B cell (primary cell): ENCODE measurements at regions of chr16 and their contacts with region 1.

Region 1: GRCh38 chr16:11797166-11797956 is at the start of gene ZC3H7A:
- DNase-seq: peak; percentile 97
- ATAC-seq: peak; percentile 97
- H3K4me3 ChIP-seq: peak within 1 kb of the TSS; percentile 81 to 99 (median 87)
- H3K4me3 Mint-ChIP-seq: peak within 1 kb of the TSS; percentile 89
- H3K27ac ChIP-seq: peak within 1 kb of the TSS; percentile 93 to 96
- H3K27ac Mint-ChIP-seq: peak within 1 kb of the TSS; percentile 98
- H3K4me1 ChIP-seq: peaks cover 40 to 43% of the 10 kb centered on the region in 2 donors
- H3K4me1 Mint-ChIP-seq: peaks cover 67% of the 10 kb centered on the region
- H3K27me3 ChIP-seq: no peaks in the 10 kb centered on the region
- H3K27me3 Mint-ChIP-seq: no peaks in the 10 kb centered on the region
- CTCF ChIP-seq: peak; percentile 65
- total RNA-seq, gene ZC3H7A: 113 and 126 TPM in 2 replicates

Region 2: DNA sequence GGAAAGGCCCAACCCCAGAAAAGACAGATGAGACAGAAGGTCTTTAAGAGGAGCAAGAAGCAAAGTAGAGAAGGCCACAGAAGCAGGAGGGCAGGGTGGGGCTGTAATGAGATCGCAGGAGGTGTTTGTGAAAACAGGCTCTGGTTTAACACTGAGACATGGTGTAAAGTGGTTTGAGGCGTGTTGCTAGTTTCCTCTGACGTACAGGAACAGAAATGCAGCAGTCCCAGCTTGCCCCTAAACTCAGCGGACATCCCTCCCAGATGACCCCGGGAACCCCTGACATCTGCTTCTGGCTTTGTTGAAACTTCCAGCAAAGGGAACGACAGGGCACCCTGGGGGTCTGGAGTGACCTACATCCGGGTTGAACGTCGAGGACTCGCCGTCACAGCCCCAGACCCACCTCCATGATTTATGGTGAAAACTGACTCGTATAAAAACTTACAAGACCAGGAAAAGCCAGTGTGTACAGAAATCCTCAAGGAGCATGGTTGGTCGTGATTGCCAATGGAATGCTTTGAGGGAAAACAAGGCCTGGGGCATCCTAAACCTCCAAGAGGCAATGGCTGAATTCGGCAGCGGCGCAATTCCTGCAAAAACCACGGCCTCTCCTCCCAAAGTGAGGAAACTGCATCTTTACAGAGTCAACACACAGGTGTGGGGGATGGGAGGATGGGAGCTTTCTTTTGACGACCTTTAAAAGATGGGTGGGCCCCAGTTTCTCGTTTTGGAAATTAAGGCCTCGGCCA is 236.5 kb before region 1 on chr16:
- CTCF ChIA-PET with region 1: no interaction called
- POLR2A ChIA-PET with region 1: no interaction called
- intact Hi-C with region 1: no loop called
- DNase-seq: peak; percentile 46
- ATAC-seq: peak; percentile 65
- H3K4me3 ChIP-seq: no peak overlapping the region
- H3K4me3 Mint-ChIP-seq: no peak overlapping the region
- H3K27ac ChIP-seq: peak overlapping the region; percentile 53 to 66
- H3K27ac Mint-ChIP-seq: peak overlapping the region; percentile 22
- H3K4me1 ChIP-seq: peaks cover 3 to 33% of the 10 kb centered on the region in 2 donors
- H3K4me1 Mint-ChIP-seq: peaks cover 43% of the 10 kb centered on the region
- H3K27me3 ChIP-seq: no peaks in the 10 kb centered on the region
- H3K27me3 Mint-ChIP-seq: no peaks in the 10 kb centered on the region
- CTCF ChIP-seq: no peak

Region 3: DNA sequence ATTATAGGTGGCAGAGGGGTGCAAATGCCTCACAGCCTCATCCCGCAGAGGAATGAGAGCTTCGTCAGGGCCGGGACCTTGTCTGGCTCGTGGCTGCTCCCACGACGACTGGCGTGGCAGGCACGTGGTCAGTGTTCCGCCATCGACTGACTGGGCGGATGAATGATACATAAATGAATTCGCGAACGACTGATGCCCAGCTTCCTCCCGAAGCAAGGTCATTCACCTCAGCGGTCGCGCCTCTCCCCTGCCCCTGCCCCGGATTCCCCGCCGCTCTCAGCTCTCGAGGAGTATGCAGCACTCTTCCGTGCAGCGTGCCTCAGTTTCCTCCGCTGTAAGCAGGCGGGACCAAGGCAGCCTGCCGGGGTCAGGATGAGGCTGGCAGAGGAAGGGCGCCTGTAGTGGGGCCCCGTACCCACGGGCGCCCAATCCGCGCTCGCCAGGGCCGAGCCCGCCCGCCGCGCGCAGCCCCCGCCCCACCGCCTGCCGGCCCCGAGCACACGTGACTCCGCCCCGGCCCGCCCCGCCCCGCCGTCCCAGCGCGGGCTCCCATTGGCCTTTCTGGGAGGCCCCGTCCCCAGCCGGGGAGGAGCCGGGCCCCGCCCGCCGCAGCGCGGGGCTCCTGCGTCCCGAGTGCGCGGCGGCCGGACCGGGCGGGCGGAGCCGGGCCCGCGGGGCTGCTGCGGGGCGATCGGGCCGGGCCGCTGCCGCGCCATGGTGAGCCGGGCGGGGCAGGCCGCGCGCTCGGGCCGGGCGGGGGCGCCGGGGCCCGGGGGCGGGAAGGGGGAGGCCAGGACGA is 129.3 kb before region 1 on chr16 and contains the start of gene SNN:
- CTCF ChIA-PET with region 1: no interaction called
- POLR2A ChIA-PET with region 1: no interaction called
- intact Hi-C with region 1: loop called (anchors 5 kb)
- DNase-seq: peak; percentile 90
- ATAC-seq: peak; percentile 76
- H3K4me3 ChIP-seq: peak within 1 kb of the TSS; percentile 68 to 90 (median 77)
- H3K4me3 Mint-ChIP-seq: peak within 1 kb of the TSS; percentile 91
- H3K27ac ChIP-seq: peak within 1 kb of the TSS; percentile 96 to 98
- H3K27ac Mint-ChIP-seq: peak within 1 kb of the TSS; percentile 93
- H3K4me1 ChIP-seq: peaks cover 54 to 73% of the 10 kb centered on the region in 2 donors
- H3K4me1 Mint-ChIP-seq: peaks cover 71% of the 10 kb centered on the region
- H3K27me3 ChIP-seq: no peaks in the 10 kb centered on the region
- H3K27me3 Mint-ChIP-seq: no peaks in the 10 kb centered on the region
- CTCF ChIP-seq: no peak
- total RNA-seq, gene SNN: 60.8 and 63.3 TPM in 2 replicates

Region 4: GRCh38 chr16:11757671-11758545 is 39.5 kb before region 1 on chr16:
- CTCF ChIA-PET with region 1: interaction called, 10 read pairs
- POLR2A ChIA-PET with region 1: no interaction called
- intact Hi-C with region 1: no loop called
- DNase-seq: no peak
- ATAC-seq: no peak
- H3K4me3 ChIP-seq: no peak overlapping the region
- H3K4me3 Mint-ChIP-seq: no peak overlapping the region
- H3K27ac ChIP-seq: no peak overlapping the region
- H3K27ac Mint-ChIP-seq: peak overlapping the region; percentile 26
- H3K4me1 ChIP-seq: peaks cover 0 to 5% of the 10 kb centered on the region in 2 donors
- H3K4me1 Mint-ChIP-seq: peaks cover 7% of the 10 kb centered on the region
- H3K27me3 ChIP-seq: no peaks in the 10 kb centered on the region
- H3K27me3 Mint-ChIP-seq: no peaks in the 10 kb centered on the region
- CTCF ChIP-seq: no peak

Region 5: DNA sequence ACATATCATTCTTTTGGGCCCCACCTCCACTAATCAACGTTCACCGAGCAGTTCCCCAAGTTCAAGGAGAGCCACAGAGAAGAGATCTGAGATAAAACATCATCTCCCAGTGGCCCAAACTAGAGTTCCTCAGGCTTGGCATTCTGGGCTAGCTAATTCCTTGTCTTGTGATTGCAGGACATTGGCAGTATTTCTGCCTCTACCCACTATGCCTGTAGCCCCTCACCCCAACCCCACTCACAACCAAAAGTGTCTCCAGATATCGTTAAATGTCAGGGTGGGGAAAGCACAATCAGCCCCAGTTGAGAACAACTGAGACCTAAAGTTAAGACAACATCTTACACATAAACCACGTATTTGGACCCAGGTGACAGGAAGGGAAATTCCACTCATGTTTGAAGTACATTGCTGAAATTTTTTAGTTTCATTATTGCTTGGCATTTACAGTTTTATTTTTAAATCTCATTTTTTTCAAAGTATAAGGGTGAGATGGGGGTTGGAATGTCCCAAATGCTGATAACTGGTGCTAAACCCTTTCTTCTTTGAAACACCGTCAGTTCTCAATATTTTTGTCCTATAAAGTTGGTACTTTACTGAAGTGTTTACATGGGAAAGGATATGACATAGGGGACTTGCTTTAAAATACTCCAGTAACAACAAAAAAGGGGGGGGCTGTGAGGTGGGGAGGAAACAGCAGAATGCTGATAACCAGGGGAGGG is 13.9 kb before region 1 on chr16:
- CTCF ChIA-PET with region 1: interaction called, 67 read pairs
- POLR2A ChIA-PET with region 1: interaction called, 28 read pairs
- intact Hi-C with region 1: loop called (anchors 1 kb)
- DNase-seq: peak; percentile 86
- ATAC-seq: peak; percentile 75
- H3K4me3 ChIP-seq: peak overlapping the region in 4 of 5 experiments; percentile 22 to 57 (median 37)
- H3K4me3 Mint-ChIP-seq: peak overlapping the region; percentile 93
- H3K27ac ChIP-seq: peak overlapping the region; percentile 98
- H3K27ac Mint-ChIP-seq: peak overlapping the region; percentile 98
- H3K4me1 ChIP-seq: peaks cover 31 to 41% of the 10 kb centered on the region in 2 donors
- H3K4me1 Mint-ChIP-seq: peaks cover 55% of the 10 kb centered on the region
- H3K27me3 ChIP-seq: no peaks in the 10 kb centered on the region
- H3K27me3 Mint-ChIP-seq: no peaks in the 10 kb centered on the region
- CTCF ChIP-seq: no peak

Region 6: DNA sequence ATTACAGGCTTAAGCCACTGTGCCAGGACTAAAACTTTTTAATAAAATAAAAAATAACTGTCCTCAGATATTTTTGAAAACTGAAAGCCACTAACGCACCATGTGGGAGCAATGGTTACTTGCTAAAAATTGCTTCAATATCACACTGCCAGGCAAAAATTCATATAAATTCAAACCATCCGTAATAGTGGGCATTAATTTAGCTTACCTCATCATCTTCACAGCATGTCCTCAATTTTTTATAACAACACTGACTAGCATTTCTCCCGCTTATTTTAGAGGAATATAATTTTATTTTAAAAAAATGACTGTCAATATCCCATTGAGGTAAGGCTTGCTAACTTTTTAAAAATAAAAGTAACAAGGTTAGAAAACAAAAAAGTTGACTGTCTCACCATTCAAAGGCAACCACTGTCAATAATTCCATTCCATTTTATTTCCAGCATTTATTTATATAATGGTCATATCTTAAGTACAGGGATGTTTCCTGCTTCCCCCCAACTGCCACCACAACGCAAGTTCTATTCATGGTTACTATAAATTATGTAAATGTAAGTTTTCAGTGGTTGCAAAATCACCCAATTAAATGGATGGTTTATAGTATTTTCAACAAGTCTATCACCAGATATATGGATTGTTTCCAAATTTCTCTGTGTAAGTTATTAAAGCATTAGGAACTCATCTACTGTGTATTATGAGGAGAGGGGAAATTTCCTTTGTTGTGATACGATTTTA is 93.0 kb after region 1 on chr16:
- CTCF ChIA-PET with region 1: no interaction called
- POLR2A ChIA-PET with region 1: no interaction called
- intact Hi-C with region 1: no loop called
- DNase-seq: no peak
- ATAC-seq: no peak
- H3K4me3 ChIP-seq: no peak overlapping the region
- H3K4me3 Mint-ChIP-seq: no peak overlapping the region
- H3K27ac ChIP-seq: no peak overlapping the region
- H3K27ac Mint-ChIP-seq: no peak overlapping the region
- H3K4me1 ChIP-seq: no peaks in the 10 kb centered on the region
- H3K4me1 Mint-ChIP-seq: no peaks in the 10 kb centered on the region
- H3K27me3 ChIP-seq: no peaks in the 10 kb centered on the region
- H3K27me3 Mint-ChIP-seq: no peaks in the 10 kb centered on the region
- CTCF ChIP-seq: no peak

Region 7: DNA sequence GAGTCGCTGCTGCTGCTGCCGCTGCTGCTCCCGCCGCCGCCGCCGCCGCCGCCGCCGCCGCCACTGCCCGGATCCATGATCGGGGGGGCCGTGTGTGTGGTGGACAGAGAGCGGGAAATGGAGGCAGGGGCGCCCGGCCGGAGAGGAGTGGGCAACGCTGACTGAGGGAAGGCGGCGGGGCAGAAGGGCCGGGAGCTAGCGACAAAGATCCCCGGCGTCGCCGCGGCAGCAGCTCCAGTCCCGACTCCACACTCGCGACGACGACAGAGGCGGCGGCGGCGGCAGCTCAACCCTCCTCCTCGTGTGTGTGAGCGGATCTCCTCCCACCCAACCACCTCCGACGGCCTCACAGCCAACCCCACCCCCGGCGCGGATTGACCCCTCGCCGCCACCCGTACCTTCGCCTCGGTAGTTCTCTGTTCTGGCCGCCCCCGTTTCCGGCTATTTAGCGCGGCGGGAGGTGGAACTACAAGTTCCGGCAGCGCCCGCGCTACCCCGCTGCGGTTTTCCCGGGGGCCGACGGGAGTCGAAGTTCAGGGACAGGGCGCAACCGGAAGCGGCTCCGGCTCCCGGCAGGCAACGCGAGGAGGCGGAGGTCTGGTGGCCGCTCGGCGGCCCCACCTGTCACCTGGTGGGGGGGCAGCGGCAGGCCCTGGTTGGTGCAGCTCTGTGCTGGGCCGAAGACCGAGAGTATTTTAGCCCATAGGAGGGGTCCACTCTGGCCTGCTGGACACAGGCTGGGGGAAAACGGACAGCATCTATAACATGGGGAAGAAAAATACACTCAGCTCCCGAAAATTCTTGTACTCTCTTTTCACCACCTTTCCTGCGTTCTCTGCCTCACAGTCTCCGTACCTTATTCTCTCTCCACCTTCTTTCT is 118.5 kb after region 1 on chr16 and contains the start of gene GSPT1:
- CTCF ChIA-PET with region 1: no interaction called
- POLR2A ChIA-PET with region 1: interaction called, 4 read pairs
- intact Hi-C with region 1: loop called (anchors 1 kb)
- DNase-seq: peak; percentile 99
- ATAC-seq: peak; percentile 93
- H3K4me3 ChIP-seq: peak within 1 kb of the TSS; percentile 65 to 78 (median 76)
- H3K4me3 Mint-ChIP-seq: peak within 1 kb of the TSS; percentile 91
- H3K27ac ChIP-seq: peak within 1 kb of the TSS; percentile 72 to 82
- H3K27ac Mint-ChIP-seq: peak within 1 kb of the TSS; percentile 95
- H3K4me1 ChIP-seq: peaks cover 29 to 31% of the 10 kb centered on the region in 2 donors
- H3K4me1 Mint-ChIP-seq: peaks cover 32% of the 10 kb centered on the region
- H3K27me3 ChIP-seq: peaks cover 0 to 4% (median 0%) of the 10 kb centered on the region in 4 experiments
- H3K27me3 Mint-ChIP-seq: peaks cover 11% of the 10 kb centered on the region
- CTCF ChIP-seq: no peak
- total RNA-seq, gene GSPT1: 72.6 and 77.0 TPM in 2 replicates